Breast epithelium (tissue), 4 donors: ENCODE measurements at regions of chr16 and their contacts with region 1.

Region 1: DNA sequence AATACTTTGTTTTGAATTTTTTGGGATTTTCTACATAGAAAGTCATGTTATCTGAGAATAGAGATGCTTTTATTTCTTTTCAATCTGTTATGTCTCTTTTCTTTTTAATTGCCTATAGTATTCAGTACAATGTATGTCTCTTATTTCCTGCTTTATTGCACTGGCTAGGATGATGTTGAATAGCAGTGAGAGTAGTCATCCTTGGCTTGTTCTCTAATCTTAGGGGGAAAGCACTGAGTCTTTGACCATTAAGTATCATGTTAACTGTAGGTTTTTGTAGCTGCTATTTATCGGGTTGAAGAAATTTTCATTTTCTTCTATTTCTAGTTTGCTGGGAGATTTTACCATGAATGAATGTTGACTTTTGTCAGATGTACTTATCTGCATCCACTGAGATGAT is 10.0 kb upstream of the ABCA3 start:
- DNase-seq: no peak
- H3K4me3 ChIP-seq: no peak overlapping the region
- H3K27ac ChIP-seq: no peak overlapping the region
- H3K4me1 ChIP-seq: no peaks in the 10 kb centered on the region
- H3K27me3 ChIP-seq: no peaks in the 10 kb centered on the region
- CTCF ChIP-seq: no peak
- POLR2A ChIP-seq: no peak

Region 2: DNA sequence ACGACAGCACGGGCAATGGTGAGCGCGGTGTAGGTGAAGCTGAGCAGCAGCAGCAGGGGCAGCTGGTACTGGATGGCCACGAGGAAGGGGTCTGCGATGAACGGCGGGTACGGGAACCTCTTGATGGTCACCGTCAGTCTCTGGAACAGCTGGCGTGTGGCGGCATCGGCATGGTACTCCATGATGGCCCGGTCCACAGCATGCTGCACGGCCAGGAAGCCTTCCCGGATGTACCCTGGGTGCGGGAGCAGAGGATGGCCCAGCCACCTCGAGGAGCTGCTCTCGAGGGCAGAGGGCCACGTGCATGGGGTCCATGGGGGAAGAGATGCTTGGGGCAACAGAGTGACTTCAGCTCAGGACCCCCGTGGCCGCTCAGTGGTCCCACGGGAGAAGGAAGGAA is 30.9 kb before region 1 on chr16:
- intact Hi-C with region 1: loop called (anchors 1 kb)
- DNase-seq: no peak
- H3K4me3 ChIP-seq: no peak overlapping the region
- H3K27ac ChIP-seq: no peak overlapping the region
- H3K4me1 ChIP-seq: no peaks in the 10 kb centered on the region
- H3K27me3 ChIP-seq: no peaks in the 10 kb centered on the region
- CTCF ChIP-seq: no peak
- POLR2A ChIP-seq: no peak